Activated B cell treated with CpG ODN at 0.5 μM for 24 hours (primary cell): ENCODE measurements at regions of chr10 and their contacts with region 1.

Region 1: DNA sequence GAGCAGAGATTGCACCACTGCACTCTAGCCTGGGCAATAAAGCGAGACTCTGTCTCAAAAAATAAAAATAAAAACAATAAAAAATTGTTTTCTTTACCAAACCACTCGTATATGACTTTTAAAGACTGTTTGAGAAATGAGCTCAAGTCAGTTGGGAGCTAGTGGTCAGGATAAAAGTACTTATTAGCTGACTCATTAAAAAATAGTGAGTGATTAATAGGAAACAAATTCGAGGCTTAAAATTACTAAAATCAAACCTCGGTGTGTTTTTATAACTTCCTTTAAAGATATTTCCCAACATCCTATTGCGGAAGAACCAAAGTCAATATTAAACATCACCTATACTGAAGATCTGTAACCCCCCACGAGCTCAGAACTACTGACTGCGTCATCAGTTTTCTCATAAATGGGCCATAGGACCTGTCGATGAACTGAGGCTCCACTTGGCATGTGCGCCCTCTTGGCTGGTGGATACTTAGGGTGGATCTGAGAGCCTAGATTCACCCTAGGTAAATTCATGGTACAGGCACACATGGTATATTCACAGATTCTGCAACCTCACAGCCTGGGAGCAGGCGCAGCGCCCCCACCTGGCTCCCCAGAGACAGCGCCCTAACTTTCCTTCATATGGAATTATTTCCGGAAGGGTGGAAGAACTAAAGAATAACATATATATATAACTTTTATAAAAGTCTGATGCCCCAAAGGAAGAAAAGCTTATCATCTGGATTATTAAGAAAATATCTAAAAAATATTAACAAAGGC is 9.2 kb downstream of the MKI67 start:
- DNase-seq: no peak
- ATAC-seq: no peak
- H3K4me3 Mint-ChIP-seq: no peak overlapping the region
- H3K27ac Mint-ChIP-seq: no peak overlapping the region
- H3K4me1 Mint-ChIP-seq: no peaks in the 10 kb centered on the region
- H3K27me3 Mint-ChIP-seq: no peaks in the 10 kb centered on the region
- CTCF ChIP-seq: no peak

Region 2: GRCh38 chr10:127293640-127294039 is 823.4 kb before region 1 on chr10:
- CTCF ChIA-PET with region 1: no interaction called
- POLR2A ChIA-PET with region 1: no interaction called
- intact Hi-C with region 1: no loop called
- DNase-seq: no peak
- ATAC-seq: no peak
- H3K4me3 Mint-ChIP-seq: no peak overlapping the region
- H3K27ac Mint-ChIP-seq: no peak overlapping the region
- H3K4me1 Mint-ChIP-seq: no peaks in the 10 kb centered on the region
- H3K27me3 Mint-ChIP-seq: no peaks in the 10 kb centered on the region
- CTCF ChIP-seq: no peak

Region 3: DNA sequence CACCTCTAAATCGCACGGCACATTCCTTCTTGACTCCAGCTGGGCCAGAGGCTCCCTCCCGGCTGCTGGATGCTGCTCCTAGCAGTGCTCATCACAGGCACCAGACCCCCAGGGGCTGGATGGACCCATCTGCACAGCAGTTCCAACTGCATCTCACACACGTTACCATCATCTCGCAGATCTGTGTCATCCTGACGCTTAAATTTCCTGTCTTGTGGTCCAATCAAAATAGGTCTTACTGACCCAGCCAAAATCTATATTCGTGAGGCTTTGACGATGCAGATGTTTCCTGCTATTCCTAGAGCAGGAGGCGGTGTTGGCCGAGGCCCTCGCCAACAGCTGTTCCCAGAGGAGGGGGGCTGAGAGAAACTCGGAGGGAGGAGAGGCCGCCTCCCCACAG is 98.8 kb before region 1 on chr10:
- CTCF ChIA-PET with region 1: no interaction called
- POLR2A ChIA-PET with region 1: no interaction called
- intact Hi-C with region 1: no loop called
- DNase-seq: no peak
- ATAC-seq: no peak
- H3K4me3 Mint-ChIP-seq: no peak overlapping the region
- H3K27ac Mint-ChIP-seq: no peak overlapping the region
- H3K4me1 Mint-ChIP-seq: peaks cover 2% of the 10 kb centered on the region
- H3K27me3 Mint-ChIP-seq: peaks cover 18% of the 10 kb centered on the region
- CTCF ChIP-seq: no peak

Region 4: DNA sequence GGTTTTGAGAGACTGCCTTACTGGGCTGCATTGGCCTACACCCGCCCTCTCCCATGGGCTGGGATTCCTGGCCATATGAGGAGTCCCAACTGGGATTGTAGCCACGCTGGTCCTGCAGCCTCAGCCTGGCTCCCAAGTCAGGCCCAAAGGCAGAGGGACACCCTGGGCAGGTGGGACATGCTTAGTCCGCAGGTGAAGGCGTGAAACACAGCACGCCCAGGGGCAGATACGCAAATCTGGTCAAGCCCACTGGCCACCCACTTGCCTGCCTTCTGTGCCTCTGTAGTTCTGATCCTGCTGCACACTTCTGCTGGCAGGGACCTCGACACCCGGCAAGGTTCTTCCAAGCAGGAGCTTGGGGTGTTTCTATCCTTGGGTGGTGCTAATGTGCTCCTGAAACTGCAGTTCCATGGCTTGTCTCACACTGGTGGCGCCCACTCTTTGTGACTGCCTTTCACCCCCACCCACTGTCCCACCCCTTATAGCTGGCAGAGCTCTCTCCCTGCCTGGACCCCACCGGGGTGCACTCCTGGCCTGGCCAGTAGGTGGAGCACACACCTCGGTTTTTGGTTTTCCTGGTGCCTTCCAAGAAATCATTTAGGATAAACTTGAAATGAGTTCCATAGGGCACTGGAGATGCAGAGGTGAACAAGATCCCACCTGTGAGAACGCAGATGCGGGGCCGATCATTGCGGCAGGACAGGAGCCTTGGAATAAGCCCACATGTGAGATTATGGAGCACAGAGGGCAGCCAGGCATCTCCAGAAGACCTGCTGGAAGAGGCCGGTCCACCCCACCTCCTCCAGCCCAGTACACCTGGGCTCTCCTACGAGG is 38.7 kb before region 1 on chr10:
- CTCF ChIA-PET with region 1: interaction called, 3 read pairs
- POLR2A ChIA-PET with region 1: no interaction called
- intact Hi-C with region 1: loop called (anchors 5 kb)
- DNase-seq: peak; percentile 47
- ATAC-seq: peak; percentile 72
- H3K4me3 Mint-ChIP-seq: no peak overlapping the region
- H3K27ac Mint-ChIP-seq: no peak overlapping the region
- H3K4me1 Mint-ChIP-seq: no peaks in the 10 kb centered on the region
- H3K27me3 Mint-ChIP-seq: no peaks in the 10 kb centered on the region
- CTCF ChIP-seq: peak; percentile 53

Region 5: GRCh38 chr10:128137877-128138276 is 20.8 kb after region 1 on chr10:
- CTCF ChIA-PET with region 1: no interaction called
- POLR2A ChIA-PET with region 1: no interaction called
- intact Hi-C with region 1: no loop called
- DNase-seq: no peak
- ATAC-seq: no peak
- H3K4me3 Mint-ChIP-seq: no peak overlapping the region
- H3K27ac Mint-ChIP-seq: no peak overlapping the region
- H3K4me1 Mint-ChIP-seq: peaks cover 4% of the 10 kb centered on the region
- H3K27me3 Mint-ChIP-seq: no peaks in the 10 kb centered on the region
- CTCF ChIP-seq: no peak

Region 6: GRCh38 chr10:128373071-128373749 is 256.2 kb after region 1 on chr10:
- CTCF ChIA-PET with region 1: no interaction called
- POLR2A ChIA-PET with region 1: no interaction called
- intact Hi-C with region 1: no loop called
- DNase-seq: no peak
- ATAC-seq: no peak
- H3K4me3 Mint-ChIP-seq: no peak overlapping the region
- H3K27ac Mint-ChIP-seq: no peak overlapping the region
- H3K4me1 Mint-ChIP-seq: peaks cover 2% of the 10 kb centered on the region
- H3K27me3 Mint-ChIP-seq: peaks cover under 1% of the 10 kb centered on the region
- CTCF ChIP-seq: no peak